Ascending aorta (tissue), 2 donors: ENCODE measurements at regions of chr1 and their contacts with region 1.

Region 1: DNA sequence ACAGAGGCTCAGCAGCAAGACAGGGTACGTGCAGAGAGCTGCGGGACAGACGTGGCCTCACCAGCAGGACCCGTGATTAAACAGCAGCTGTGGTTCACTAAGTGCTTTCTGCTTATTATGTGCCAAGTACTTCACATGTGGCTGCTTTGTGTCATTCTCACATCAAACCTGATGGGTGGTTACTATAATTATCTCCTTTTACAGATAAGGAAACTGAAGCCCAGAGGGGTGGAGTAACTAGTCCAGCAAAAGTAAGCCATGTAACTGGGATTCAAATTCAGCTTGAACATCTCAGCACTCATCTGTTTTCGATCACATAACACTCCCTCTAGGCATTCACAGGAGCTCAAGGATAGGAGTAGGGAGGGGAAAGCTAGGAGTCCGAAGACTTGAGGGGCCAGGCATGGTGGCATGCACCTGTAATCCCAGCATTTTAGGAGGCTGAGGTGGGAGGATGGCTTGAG is 50.8 kb upstream of the CLIC4 start:
- DNase-seq: no peak
- H3K4me3 ChIP-seq: no peak overlapping the region
- H3K27ac ChIP-seq: peak overlapping the region in 1 of 2 donors; percentile 45
- H3K4me1 ChIP-seq: peaks cover 0 to 12% of the 10 kb centered on the region in 2 donors
- H3K27me3 ChIP-seq: no peaks in the 10 kb centered on the region
- CTCF ChIP-seq: no peak

Region 2: DNA sequence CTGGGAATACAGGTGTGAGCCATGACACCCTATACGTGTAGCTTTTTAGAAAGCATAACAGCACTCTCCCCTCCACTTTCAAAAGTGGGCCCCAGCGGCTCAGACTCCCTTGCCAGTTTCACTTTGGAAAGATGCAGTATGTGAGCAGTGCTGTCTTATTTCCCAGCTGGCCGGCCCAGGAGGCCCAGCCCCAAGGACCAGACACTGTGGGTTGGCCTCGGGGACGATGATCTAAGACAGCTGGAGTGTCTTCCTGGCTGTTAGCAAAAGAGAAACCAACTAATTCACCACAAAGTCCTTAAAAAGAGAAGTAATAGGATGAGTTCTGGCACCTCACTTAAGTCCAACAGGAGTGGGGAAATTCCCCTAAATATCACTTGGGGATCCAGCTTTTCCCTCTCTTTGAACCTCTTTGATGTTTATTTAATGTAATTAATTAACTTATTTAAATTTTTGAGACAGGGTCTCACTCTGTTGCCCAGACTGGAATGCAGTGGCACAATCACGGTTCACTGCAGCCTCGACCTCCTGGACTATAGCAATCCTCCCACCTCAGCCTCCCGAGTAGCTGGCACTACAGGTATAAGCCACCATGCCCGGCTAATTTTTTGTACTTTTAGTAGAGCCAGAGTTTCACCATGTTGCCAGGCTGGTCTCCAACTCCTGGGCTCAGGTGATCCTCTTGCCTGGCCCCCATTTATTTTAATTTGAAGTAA is 33.2 kb after region 1 on chr1:
- intact Hi-C with region 1: loop called (anchors 5 kb)
- DNase-seq: peak; percentile 43 to 82
- H3K4me3 ChIP-seq: no peak overlapping the region
- H3K27ac ChIP-seq: peak overlapping the region in 1 of 2 donors; percentile 45
- H3K4me1 ChIP-seq: peaks cover 0 to 10% of the 10 kb centered on the region in 2 donors
- H3K27me3 ChIP-seq: no peaks in the 10 kb centered on the region
- CTCF ChIP-seq: no peak

Region 3: DNA sequence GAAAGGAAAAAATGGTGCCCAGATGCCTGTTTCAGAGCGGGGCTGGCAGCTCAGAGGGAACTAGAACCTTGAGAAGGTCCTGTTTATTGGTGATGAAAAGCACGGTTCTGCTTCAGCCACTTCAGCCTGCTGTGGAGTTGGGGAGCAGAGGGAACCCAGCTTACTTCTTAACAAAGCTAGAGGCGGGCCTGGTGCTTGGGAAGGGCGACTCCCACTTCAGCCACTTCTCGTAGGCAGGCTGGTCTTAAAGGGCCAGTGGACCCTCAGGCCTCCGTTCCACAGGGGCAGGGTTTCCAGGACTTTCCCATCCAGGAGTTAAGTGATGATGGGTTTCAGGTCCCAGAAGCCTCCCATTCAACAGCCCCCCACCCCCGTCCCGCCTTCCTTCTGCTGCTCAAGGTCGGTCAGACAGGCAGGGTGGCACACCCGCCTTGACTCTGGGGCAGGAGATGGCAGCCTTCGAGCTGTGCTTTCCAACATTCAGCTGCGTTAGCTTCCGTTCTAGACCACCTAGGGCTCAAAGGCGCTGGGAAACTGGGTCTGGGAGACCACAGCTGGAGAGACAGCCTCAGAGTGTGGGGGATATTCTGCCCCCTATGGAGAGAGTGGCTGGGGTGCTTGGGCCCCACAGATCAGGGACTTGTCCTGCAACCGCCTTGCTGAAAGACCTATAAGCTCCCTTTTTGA is 232.3 kb after region 1 on chr1:
- intact Hi-C with region 1: no loop called
- DNase-seq: no peak
- H3K4me3 ChIP-seq: no peak overlapping the region
- H3K27ac ChIP-seq: no peak overlapping the region
- H3K4me1 ChIP-seq: peaks cover 0 to 9% of the 10 kb centered on the region in 2 donors
- H3K27me3 ChIP-seq: peaks cover 3% of the 10 kb centered on the region
- CTCF ChIP-seq: no peak